ENCODE measurements at regions of chr2 and their contacts with region 1.

Region 1: GRCh38 chr2:130791608-130791922 is 36.2 kb downstream of the AMER3 start:
- DNase-seq: peak in 3 of 4 donors; percentile 47 to 66 (median 50)
- ATAC-seq: peak; percentile 24
- H3K4me3 ChIP-seq: no peak overlapping the region
- H3K27ac ChIP-seq: peak overlapping the region in 2 of 4 donors; percentile 14 to 52
- H3K4me1 ChIP-seq: no peaks in the 10 kb centered on the region
- H3K27me3 ChIP-seq: no peaks in the 10 kb centered on the region
- CTCF ChIP-seq: no peak
- POLR2A ChIP-seq: no peak

Region 2: GRCh38 chr2:130917006-130917688 is 125.6 kb after region 1 on chr2:
- intact Hi-C with region 1: loop called (anchors 5 kb)
- DNase-seq: no peak
- ATAC-seq: no peak
- H3K4me3 ChIP-seq: no peak overlapping the region
- H3K27ac ChIP-seq: no peak overlapping the region
- H3K4me1 ChIP-seq: peaks cover 4% of the 10 kb centered on the region
- H3K27me3 ChIP-seq: no peaks in the 10 kb centered on the region
- CTCF ChIP-seq: no peak
- POLR2A ChIP-seq: no peak

Measured in body of pancreas (tissue), 4 donors.